ENCODE measurements at regions of chr19 and their contacts with region 1.

Region 1: DNA sequence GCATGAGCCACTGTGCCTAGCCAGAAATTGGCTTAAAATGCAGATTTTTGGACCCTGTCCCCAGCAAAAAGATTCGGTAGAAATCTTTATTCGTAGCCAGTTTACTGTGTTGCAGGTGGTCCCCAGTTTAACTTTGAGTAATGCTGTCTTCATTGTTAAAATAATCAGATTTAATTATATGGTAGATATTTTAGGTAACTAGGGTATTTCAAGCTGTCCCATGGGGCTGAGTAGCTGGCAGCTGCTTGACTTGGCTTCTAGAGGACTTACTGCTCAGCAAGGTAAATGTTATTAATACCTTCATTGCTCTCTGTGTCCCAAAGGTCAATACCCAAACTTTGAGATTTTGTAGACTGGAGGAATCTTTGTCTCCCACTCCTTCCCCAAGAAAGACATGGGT is 21.1 kb downstream of the LSM14A start:
- DNase-seq: no peak
- H3K4me3 ChIP-seq: no peak overlapping the region
- H3K27ac ChIP-seq: no peak overlapping the region
- H3K4me1 ChIP-seq: no peaks in the 10 kb centered on the region; a peak in 1 of 7 replicates
- H3K27me3 ChIP-seq: no peaks in the 10 kb centered on the region
- CTCF ChIP-seq: no peak
- EP300 ChIP-seq: no peak
- POLR2A ChIP-seq: no peak
- RAD21 ChIP-seq: no peak

Region 2: DNA sequence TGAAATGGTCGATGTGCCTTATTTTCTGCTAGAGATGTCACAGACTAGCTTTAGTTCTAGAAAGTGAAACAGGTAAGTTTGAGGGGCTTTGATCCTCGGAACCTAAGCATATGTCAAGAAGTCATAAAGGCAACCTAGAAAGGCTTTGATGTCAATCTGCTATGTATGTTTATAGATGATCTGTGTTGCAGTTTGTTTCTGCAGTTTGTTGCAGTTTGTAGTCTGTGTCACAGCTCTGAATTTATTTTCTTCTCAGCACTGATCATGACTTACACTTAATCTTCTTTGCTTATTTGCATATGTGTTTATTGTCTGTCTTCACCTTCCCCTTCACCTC is 15.2 kb before region 1 on chr19:
- CTCF ChIA-PET with region 1: no interaction called
- POLR2A ChIA-PET with region 1: interaction called, 11 read pairs
- DNase-seq: no peak
- H3K4me3 ChIP-seq: no peak overlapping the region
- H3K27ac ChIP-seq: no peak overlapping the region
- H3K4me1 ChIP-seq: peaks cover 0 to 2% (median 0%) of the 10 kb centered on the region in 4 experiments; a peak in 2 of 7 replicates
- H3K27me3 ChIP-seq: no peaks in the 10 kb centered on the region
- CTCF ChIP-seq: no peak
- EP300 ChIP-seq: no peak
- POLR2A ChIP-seq: no peak
- RAD21 ChIP-seq: no peak